Panc1 (cell line): ENCODE measurements at regions of chr7 and their contacts with region 1.

Region 1: DNA sequence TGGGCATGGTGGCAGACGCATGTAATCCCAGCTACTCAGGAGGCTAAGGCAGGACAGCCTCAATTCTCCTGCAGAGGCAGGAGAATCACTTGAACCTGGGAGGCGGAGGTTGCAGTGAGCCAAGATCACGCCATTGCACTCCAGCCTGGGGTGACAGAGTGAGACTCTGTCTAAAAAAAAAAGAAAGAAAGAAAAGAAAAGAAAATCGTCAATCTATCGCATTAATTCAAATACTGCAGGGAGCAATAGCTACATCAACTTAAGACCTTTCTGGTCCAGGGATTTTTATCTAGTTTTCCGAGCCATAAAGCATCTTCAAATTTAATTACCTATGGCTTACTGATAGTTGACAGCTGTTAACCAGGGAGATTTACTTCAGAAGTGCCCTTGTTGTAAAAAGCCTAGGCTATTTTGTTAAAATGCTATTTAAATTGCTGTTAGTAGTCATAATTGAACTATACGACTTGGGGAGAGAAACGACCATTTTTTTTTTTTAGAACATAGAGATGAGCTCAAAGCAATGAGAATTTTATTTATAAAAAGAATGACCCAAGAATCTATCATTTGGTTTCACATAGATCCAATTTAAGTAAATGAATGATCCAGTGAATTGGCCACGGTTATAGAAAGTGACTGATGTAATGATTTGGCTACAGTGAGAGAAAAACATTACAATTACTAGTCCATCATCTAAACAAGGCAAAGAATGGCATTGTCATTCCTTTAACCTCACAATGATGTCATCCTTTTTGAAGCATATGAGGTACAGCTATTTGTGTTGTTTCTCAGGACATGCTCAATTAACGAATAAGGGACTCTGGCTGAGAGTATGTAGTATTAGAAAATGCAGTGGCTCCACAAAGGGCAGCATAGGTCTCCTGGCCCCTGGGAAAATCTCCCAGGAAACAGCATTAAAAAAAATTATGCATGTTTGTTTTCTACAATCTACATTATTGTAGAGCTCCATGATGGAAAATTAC is 85.3 kb downstream of the SEMA3C start:
- DNase-seq: no peak
- ATAC-seq: no peak
- H3K4me3 ChIP-seq: no peak overlapping the region
- H3K27ac ChIP-seq: peak overlapping the region; percentile 90
- H3K4me1 ChIP-seq: peaks cover 90% of the 10 kb centered on the region
- H3K27me3 ChIP-seq: no peaks in the 10 kb centered on the region
- CTCF ChIP-seq: no peak

Region 2: DNA sequence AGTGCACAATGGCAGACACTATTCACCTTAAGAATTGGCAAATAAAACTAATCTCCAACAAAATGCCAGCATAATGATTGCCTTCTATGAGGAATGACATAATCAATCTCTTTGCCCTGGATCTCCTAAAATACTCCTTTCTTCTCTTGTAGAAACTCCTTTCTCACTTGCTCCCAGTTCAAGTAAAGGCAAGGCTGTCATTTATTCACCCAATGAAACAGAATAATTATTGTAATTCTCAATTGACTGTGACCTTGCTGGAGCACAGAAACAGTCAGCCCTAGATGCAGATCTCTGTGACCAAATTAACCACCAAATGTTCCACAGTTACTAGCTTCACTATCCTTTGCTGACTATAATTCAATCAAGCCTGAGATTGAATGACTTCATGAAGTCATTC is 14.1 kb before region 1 on chr7:
- CTCF ChIA-PET with region 1: no interaction called
- POLR2A ChIA-PET with region 1: interaction called, 13 read pairs
- in situ Hi-C with region 1: no loop called
- intact Hi-C with region 1: no loop called
- DNase-seq: no peak
- ATAC-seq: no peak
- H3K4me3 ChIP-seq: no peak overlapping the region
- H3K27ac ChIP-seq: peak overlapping the region; percentile 66
- H3K4me1 ChIP-seq: peaks cover 43% of the 10 kb centered on the region
- H3K27me3 ChIP-seq: no peaks in the 10 kb centered on the region
- CTCF ChIP-seq: no peak